Dendritic cell treated with granulocyte-macrophage colony-stimulating factor and Interleukin-4, amounts not matched to agents 40 ng/mL and 50 ng/mL, for 4 days (primary cell): ENCODE measurements at regions of chr17 and their contacts with region 1.

Region 1: GRCh38 chr17:3893003-3893719 is at the start of gene CAMKK1:
- H3K4me3 Mint-ChIP-seq: peak within 1 kb of the TSS; percentile 77
- H3K27ac Mint-ChIP-seq: peak within 1 kb of the TSS; percentile 81
- H3K4me1 Mint-ChIP-seq: peaks cover 74% of the 10 kb centered on the region
- H3K27me3 Mint-ChIP-seq: peaks cover 10% of the 10 kb centered on the region

Region 2: GRCh38 chr17:3845621-3846441 is 47.3 kb before region 1 on chr17 and contains the start of gene NCBP3:
- intact Hi-C with region 1: loop called (anchors 10 kb)
- H3K4me3 Mint-ChIP-seq: peak within 1 kb of the TSS; percentile 91
- H3K27ac Mint-ChIP-seq: peak within 1 kb of the TSS; percentile 93
- H3K4me1 Mint-ChIP-seq: peaks cover 36% of the 10 kb centered on the region
- H3K27me3 Mint-ChIP-seq: peaks cover 4% of the 10 kb centered on the region